ENCODE measurements at regions of chr1 and their contacts with region 1.

Region 1: GRCh38 chr1:155091071-155091709 is 12.6 kb downstream of the EFNA3 start:
- DNase-seq: peak; percentile 81 to 94 (median 91)
- ATAC-seq: peak; percentile 28 to 65
- H3K4me3 ChIP-seq: no peak overlapping the region
- H3K27ac ChIP-seq: no peak overlapping the region
- H3K4me1 ChIP-seq: peaks cover 7% of the 10 kb centered on the region
- H3K27me3 ChIP-seq: no peaks in the 10 kb centered on the region

Region 2: GRCh38 chr1:155167166-155168104 is 76.2 kb after region 1 on chr1:
- intact Hi-C with region 1: loop called (anchors 2 to 5 kb)
- DNase-seq: peak; percentile 92 to 95 (median 94)
- ATAC-seq: peak; percentile 77 to 79
- H3K4me3 ChIP-seq: no peak overlapping the region
- H3K27ac ChIP-seq: peak overlapping the region; percentile 80
- H3K4me1 ChIP-seq: peaks cover 2% of the 10 kb centered on the region
- H3K27me3 ChIP-seq: no peaks in the 10 kb centered on the region

Measured in right cardiac atrium (tissue), 5 donors.